ENCODE measurements at regions of chr19 and their contacts with region 1.

Region 1: DNA sequence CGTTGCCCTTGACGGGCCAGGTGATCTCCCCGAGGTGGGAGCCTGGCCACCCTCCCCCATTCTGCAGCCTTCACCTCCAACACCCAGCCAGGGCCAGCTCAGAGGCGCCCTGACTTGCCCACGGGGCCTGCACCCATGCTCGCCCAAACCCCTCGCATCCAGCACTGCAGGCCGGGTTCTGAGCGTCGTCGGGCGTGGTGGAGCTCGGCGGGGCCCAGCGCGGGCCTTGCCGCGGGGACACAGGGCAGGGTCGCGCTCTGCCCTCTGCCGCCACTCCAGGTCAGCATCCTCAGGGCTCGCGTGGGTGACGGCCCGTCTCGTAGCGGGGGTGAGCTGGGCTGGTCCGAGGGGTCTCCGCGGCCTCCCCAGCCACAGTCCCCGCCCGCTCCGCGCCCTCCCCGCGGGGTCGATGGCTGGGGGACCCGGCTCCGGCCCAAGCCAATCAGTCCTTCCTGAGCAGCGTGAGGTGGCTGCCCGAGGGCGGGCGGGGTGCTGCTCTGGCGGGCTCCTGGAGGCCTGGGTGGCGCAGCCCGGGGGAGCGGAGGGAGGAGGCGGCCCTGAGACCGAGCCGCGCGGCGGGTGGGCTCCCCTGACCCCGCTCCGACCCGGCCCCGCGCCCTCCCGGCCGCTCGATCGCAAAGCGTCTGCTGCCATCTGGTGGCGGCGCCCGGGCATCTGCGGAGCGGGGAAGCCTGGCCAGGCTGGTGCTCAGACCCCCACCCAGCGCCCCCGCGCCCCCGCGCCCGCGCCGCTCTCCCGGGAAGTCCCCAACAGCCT is 61.4 kb downstream of the CCNE1 start:
- DNase-seq: peak; percentile 59 to 83
- ATAC-seq: peak; percentile 62 to 81 (median 74)
- H3K4me3 ChIP-seq: peak overlapping the region; percentile 79
- H3K27ac ChIP-seq: peak overlapping the region; percentile 83
- H3K4me1 ChIP-seq: peaks cover 13% of the 10 kb centered on the region
- H3K27me3 ChIP-seq: no peaks in the 10 kb centered on the region
- CTCF ChIP-seq: peak; percentile 87

Region 2: DNA sequence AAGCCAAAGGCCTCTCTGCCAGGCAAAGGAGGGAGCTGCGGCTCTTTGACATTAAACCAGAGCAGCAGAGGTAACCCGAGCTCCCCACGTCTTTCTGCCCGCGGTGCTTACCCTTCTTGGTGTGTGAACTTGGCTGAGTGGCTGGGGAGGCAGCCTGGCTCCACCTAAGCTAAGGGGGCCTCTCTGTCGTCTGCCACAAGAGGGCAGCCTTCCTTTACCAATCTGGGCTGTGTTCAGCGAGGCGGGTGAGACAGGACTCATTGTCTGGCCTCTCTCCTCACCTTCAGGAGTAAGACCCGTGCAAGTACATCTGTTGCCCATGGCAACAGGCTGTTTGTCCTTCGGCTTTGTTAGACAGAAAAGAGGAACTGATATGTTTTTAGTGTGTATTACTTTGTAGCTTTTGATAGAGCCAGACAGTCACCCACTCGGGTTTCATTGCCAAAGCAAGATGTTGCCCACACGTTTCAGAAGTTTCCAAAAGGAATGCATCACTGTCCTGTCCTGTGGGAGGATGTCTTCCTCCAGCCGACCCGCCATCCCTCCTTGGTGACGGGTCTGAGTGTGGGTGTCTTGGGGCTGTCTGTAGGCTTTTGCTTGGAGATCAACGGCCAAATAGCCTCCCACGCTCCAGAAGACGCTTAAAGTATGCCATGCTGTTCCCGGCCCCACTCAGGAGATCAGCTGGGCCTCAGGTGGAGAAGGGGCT is 262.5 kb before region 1 on chr19:
- intact Hi-C with region 1: loop called (anchors 10 kb)
- DNase-seq: peak; percentile 82 to 90
- ATAC-seq: peak; percentile 83 to 86 (median 86)
- H3K4me3 ChIP-seq: no peak overlapping the region
- H3K27ac ChIP-seq: peak overlapping the region; percentile 71
- H3K4me1 ChIP-seq: peaks cover 16% of the 10 kb centered on the region
- H3K27me3 ChIP-seq: no peaks in the 10 kb centered on the region
- CTCF ChIP-seq: peak; percentile 89

Region 3: DNA sequence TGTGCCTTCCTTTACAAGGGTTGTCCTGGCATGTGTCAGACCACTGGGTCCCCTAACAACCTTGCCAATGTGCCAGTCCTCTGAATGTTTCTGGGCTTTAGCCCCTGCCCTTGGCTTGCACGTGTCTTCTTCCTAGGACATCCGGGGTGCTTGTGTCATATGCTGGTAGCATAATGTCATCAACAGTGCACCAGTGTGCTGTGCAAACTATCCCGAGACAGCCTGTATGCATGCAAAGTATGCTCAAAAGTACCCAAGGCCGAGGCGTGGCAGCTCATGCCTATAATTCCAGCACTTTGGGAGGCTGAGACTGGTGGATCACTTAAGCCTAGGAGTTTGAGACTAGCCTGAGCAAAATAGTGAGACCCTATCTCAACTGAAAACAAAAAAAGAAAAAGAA is 137.4 kb before region 1 on chr19:
- intact Hi-C with region 1: loop called in 1 of 2 experiments (anchors 1 kb)
- DNase-seq: no peak
- ATAC-seq: no peak
- H3K4me3 ChIP-seq: no peak overlapping the region
- H3K27ac ChIP-seq: no peak overlapping the region
- H3K4me1 ChIP-seq: no peaks in the 10 kb centered on the region
- H3K27me3 ChIP-seq: no peaks in the 10 kb centered on the region
- CTCF ChIP-seq: no peak

Region 4: GRCh38 chr19:29760752-29761502 is 112.3 kb before region 1 on chr19:
- intact Hi-C with region 1: loop called (anchors 1 to 5 kb)
- DNase-seq: no peak
- ATAC-seq: no peak
- H3K4me3 ChIP-seq: no peak overlapping the region
- H3K27ac ChIP-seq: no peak overlapping the region
- H3K4me1 ChIP-seq: no peaks in the 10 kb centered on the region
- H3K27me3 ChIP-seq: no peaks in the 10 kb centered on the region
- CTCF ChIP-seq: no peak

Region 5: DNA sequence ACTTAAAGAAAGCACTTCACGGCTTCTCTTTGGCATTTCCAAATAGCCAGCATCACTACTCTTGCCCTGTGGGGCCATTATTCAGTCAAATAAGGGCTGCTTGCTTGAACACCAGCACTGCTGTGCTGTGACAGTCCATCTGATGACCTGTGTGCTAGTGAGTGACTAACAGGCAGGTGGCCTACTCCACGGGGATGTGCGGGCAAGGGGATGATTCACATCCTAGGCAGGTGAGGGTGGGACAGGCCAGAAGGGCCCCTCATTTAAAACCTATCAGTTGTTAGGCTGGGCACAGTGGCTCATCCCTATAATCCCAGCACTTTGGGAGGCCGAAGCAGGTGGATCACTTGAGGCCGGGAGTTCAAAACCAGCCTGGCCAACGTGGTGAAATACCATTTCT is 53.2 kb before region 1 on chr19:
- intact Hi-C with region 1: no loop called
- DNase-seq: no peak
- ATAC-seq: no peak
- H3K4me3 ChIP-seq: no peak overlapping the region
- H3K27ac ChIP-seq: no peak overlapping the region
- H3K4me1 ChIP-seq: no peaks in the 10 kb centered on the region
- H3K27me3 ChIP-seq: no peaks in the 10 kb centered on the region
- CTCF ChIP-seq: no peak

Region 6: DNA sequence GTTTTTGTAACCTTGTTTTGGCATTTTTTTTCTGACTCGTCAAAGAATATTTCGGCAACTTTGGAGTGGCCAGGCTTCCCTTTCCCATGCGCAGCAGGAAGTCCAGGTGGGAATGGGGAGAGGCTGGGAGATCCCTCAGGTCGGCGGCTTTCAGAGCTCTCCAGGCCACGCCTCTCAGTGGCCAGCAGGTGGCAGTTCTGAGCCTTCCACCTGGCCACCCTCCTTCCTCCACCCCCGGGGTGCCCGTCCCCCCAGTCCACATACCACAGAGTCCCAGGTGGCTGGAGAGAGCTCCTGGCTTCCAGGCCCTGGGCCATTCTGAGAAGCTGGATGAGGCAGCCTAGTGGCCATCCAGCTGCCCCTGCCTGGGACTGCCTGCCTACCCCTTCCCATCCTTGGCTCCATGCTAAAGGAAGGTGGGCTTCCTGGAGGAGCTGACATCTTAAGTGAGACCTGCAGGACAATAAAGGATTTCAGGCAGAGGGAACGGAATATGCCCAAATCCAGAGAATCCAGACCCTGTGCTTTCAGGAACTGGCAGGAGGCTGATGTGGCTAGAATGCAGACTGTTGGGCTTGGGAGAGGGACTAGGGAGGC is 15.1 kb before region 1 on chr19:
- intact Hi-C with region 1: loop called in 1 of 2 experiments (anchors 1 kb)
- DNase-seq: peak in 1 of 2 donors; percentile 61
- ATAC-seq: peak; percentile 58 to 88 (median 80)
- H3K4me3 ChIP-seq: no peak overlapping the region
- H3K27ac ChIP-seq: no peak overlapping the region
- H3K4me1 ChIP-seq: no peaks in the 10 kb centered on the region
- H3K27me3 ChIP-seq: no peaks in the 10 kb centered on the region
- CTCF ChIP-seq: peak; percentile 59